Posterior vena cava (tissue), 2 donors: ENCODE measurements at regions of chr11 and their contacts with region 1.

Region 1: DNA sequence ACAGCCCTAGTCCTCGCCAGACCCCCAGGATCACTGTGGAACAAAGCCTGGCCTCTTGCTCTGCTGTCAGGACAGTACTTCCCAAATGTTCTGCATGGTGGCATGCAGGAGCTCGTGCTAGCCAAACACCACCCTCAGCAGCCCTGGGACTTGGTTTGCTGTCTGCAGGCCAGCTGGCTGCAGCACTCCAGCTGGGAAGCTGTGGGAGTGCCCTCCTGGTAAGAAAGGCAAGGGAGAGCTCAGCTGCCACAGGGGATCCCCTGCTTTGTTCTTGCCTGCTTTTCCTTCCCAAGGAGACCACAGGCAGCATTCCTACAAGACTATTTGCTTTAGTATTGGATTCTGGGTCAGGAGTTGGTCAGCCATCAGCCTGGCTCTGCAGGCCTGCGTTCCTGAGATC is 27.9 kb downstream of the TCIRG1 start:
- DNase-seq: no peak

Region 2: GRCh38 chr11:68106165-68106957 is 39.6 kb after region 1 on chr11:
- intact Hi-C with region 1: loop called in 1 of 2 experiments (anchors 1 kb)
- DNase-seq: no peak